Motor neuron (in vitro differentiated cells): ENCODE measurements at regions of chr10 and their contacts with region 1.

Region 1: GRCh38 chr10:126387023-126387921 is 1.0 kb downstream of the ADAM12 start:
- ATAC-seq: peak; percentile 38 to 77 (median 56)
- H3K4me3 ChIP-seq: peak overlapping the region; percentile 41 to 55 (median 50)
- H3K27ac ChIP-seq: no peak overlapping the region
- H3K4me1 ChIP-seq: peaks cover 24 to 28% of the 10 kb centered on the region in 2 donors

Region 2: GRCh38 chr10:125982260-125982948 is 404.9 kb before region 1 on chr10:
- in situ Hi-C with region 1: loop called in 2 of 9 experiments (anchors 10 to 25 kb)
- ATAC-seq: peak; percentile 70 to 92 (median 88)
- H3K4me3 ChIP-seq: no peak overlapping the region
- H3K27ac ChIP-seq: no peak overlapping the region
- H3K4me1 ChIP-seq: peaks cover 15 to 19% of the 10 kb centered on the region in 2 donors

Region 3: GRCh38 chr10:126148227-126148587 is 239.1 kb before region 1 on chr10:
- in situ Hi-C with region 1: loop called in 1 of 9 experiments (anchors 25 kb)
- ATAC-seq: peak in 7 of 8 experiments; percentile 71 to 93 (median 87)
- H3K4me3 ChIP-seq: no peak overlapping the region
- H3K27ac ChIP-seq: peak overlapping the region in 1 of 2 donors; percentile 43
- H3K4me1 ChIP-seq: peaks cover 19 to 21% of the 10 kb centered on the region in 2 donors

Region 4: DNA sequence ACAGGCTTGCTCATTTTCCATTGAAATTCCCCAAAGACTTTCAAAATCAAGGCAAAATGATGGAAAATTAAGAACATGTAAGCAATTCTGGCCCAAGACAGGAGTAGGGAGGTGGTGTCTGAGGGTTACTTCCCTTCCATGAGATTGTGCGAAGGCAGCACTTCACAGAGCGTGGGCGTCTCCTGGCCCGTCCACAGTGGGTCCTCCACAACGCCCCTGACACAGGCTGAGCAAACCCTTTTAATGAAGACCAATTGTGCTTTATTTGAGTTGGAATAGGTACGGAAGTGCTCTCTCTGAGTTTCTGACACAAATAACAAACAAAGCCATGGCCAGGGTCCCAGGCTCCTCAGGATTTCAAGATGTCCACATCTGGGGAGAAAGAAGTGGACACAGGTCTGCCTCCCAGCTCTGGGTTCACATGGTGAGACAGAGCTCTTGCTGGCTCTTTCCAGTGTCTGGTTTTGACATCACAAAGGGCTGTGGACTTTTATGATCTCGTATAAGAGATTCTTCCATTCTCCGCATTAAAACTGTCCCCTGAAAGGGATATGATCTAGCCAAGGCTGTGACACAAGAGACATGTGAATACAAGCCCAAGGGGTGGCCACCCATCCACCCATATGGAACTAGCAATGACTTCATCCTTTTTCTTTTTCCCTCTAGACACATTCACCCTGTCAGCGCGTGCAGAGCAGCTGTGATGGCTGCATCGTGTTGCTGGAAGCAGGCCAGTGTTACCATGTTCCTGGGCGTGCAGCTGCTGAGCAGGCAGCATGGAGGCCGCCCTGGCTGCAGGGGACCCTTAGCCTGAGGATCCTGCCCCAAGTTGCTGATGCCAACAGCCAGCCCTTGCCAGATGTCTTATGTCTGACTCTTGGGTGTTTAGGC is 144.6 kb before region 1 on chr10:
- in situ Hi-C with region 1: loop called in 1 of 9 experiments (anchors 25 kb)
- ATAC-seq: peak; percentile 64 to 95 (median 86)
- H3K4me3 ChIP-seq: no peak overlapping the region
- H3K27ac ChIP-seq: peak overlapping the region in 1 of 2 donors; percentile 24
- H3K4me1 ChIP-seq: peaks cover 30 to 38% of the 10 kb centered on the region in 2 donors

Region 5: DNA sequence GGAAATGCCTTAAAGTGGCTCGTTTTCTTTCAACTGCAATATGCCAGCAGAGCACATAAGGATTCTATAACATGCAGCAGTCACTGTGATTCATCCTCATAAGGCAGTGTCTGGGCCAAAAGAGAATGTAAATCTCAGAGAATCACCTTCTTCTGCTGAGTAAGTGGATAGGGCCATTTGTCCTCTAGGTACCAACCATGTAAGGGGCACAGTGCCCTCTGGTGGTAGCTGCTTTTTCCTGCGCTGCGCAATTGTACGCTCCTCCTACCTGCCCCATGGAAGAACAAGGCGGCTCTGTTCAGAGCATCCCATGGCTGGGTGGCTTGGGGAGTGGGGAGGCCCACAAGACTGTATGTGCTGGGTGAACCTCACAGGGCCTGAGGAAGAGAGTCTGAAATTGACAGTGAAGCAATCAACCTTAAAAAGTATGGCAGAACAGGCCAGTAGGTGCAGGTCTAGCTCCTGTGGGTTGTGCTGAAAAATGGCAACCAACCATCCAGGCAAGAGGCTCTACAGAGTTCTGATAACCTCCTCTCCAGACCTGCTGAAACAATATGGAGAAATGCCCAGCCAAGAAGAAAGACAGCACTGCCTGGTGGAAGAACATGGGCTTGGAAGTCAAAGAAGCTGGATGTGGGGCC is 361.9 kb after region 1 on chr10:
- in situ Hi-C with region 1: loop called in 1 of 9 experiments (anchors 25 kb)
- ATAC-seq: peak; percentile 92 to 100 (median 96)
- H3K4me3 ChIP-seq: no peak overlapping the region
- H3K27ac ChIP-seq: peak overlapping the region in 1 of 2 donors; percentile 35
- H3K4me1 ChIP-seq: peaks cover 20 to 22% of the 10 kb centered on the region in 2 donors

Region 6: DNA sequence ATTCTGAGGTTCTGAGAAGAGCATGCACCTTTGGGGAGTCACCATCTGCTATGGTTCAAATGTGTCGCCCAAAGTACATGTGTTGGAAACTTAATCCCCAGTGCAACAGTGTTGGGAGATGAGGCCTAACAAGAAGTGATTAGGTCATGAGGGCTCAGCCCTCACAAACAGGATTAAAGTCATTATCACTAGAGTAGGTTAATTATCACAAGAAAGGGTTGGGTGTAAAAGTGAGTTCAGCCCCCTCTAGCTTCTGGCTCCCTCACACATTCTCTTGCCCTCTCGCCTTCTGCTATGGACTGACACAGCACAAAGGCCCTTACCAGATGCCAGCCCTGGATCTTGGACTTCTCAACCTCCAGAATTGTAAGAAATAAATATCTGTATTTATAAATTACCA is 383.5 kb after region 1 on chr10:
- in situ Hi-C with region 1: no loop called
- ATAC-seq: no peak
- H3K4me3 ChIP-seq: no peak overlapping the region
- H3K27ac ChIP-seq: no peak overlapping the region
- H3K4me1 ChIP-seq: peaks cover 9 to 10% of the 10 kb centered on the region in 2 donors